ENCODE measurements at regions of chr18 and their contacts with region 1.

Region 1: DNA sequence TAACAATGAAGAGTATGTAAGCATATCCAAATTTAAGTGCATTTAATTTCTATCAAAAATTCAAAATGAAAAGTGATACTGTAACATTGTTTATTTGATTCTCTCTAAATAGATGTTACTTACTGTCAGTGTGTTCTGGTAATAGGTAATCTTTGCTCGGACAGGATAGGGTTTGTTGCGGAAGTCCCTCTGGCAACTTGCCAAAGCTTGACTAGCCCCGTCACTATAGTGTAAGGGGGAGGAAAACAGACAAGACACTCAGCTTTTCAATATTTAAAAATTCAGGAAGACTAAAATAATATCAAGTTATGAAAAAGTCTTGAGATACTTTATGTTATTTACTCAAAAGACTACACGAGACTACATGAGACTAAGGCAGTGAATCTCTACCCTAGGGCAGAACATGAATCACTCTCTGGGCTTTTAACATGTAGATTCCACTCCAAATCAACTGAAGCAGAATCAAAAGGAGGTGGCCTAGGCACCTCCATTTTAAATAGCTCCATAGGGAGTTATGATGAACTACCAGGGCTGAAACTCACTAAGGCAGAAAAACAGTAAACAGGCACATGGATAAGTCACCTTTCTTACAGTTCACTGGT is 5.9 kb downstream of the LMAN1 start:
- DNase-seq: no peak
- ATAC-seq: no peak
- H3K4me3 ChIP-seq: no peak overlapping the region
- H3K27ac ChIP-seq: no peak overlapping the region
- H3K4me1 ChIP-seq: peaks cover 17% of the 10 kb centered on the region; the same call in 2 of the 3 replicates
- CTCF ChIP-seq: no peak
- EP300 ChIP-seq: no peak
- POLR2A ChIP-seq: no peak
- RAD21 ChIP-seq: no peak

Region 2: GRCh38 chr18:59308248-59308937 is 44.8 kb before region 1 on chr18:
- CTCF ChIA-PET with region 1: interaction called, 11 read pairs
- POLR2A ChIA-PET with region 1: no interaction called
- DNase-seq: peak; percentile 55 to 61
- ATAC-seq: peak; percentile 98 to 99
- H3K4me3 ChIP-seq: peak overlapping the region; percentile 44
- H3K27ac ChIP-seq: no peak overlapping the region; a peak in 1 of 6 replicates
- H3K4me1 ChIP-seq: no peaks in the 10 kb centered on the region
- CTCF ChIP-seq: peak; percentile 77
- EP300 ChIP-seq: no peak
- POLR2A ChIP-seq: no peak
- RAD21 ChIP-seq: peak; percentile 44 to 72

Region 3: GRCh38 chr18:59690996-59691395 is 337.8 kb after region 1 on chr18:
- CTCF ChIA-PET with region 1: no interaction called
- POLR2A ChIA-PET with region 1: no interaction called
- DNase-seq: no peak
- ATAC-seq: no peak
- H3K4me3 ChIP-seq: no peak overlapping the region
- H3K27ac ChIP-seq: no peak overlapping the region
- H3K4me1 ChIP-seq: no peaks in the 10 kb centered on the region
- CTCF ChIP-seq: no peak
- EP300 ChIP-seq: no peak
- POLR2A ChIP-seq: no peak
- RAD21 ChIP-seq: no peak